ENCODE measurements at regions of chr1 and their contacts with region 1.

Region 1: DNA sequence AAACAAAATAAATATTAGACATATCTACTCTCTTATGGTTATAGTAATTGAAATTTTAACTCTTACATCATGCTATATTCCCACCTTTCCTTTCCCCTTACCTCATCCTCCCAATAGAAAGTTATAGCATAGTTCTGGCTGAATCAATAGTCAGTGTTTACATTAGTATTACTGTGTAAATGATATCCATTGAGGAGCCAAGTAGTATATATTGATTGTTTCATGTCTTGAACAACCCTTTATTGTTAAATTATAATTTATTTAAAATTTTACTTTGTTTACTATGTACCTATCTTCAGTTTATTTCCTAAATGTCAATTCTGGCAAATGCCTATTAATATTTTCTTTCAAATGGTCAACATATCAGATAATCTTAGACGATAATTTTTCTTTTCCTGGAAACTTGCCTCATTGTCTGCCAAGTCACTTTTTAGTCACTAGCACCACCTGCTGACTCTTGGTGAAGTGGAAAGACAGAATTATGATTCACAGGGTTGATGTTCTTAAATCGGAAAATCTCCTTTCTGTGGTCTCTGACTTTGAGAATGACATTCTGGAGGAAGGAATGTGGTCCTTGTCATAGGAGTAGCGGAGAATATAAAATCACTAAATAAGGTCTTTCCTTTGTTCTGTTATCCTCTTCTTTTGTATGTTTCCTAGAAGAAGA is 8.7 kb downstream of the HJV start:
- DNase-seq: no peak
- ATAC-seq: peak; percentile 68
- H3K4me3 ChIP-seq: no peak overlapping the region
- H3K27ac ChIP-seq: no peak overlapping the region
- H3K4me1 ChIP-seq: peaks cover 18% of the 10 kb centered on the region
- H3K27me3 ChIP-seq: no peaks in the 10 kb centered on the region
- CTCF ChIP-seq: peak; percentile 79

Region 2: GRCh38 chr1:145858894-145859490 is 153.9 kb before region 1 on chr1 and contains the start of gene PIAS3:
- intact Hi-C with region 1: loop called (anchors 10 kb)
- DNase-seq: peak; percentile 98
- ATAC-seq: peak; percentile 96
- H3K4me3 ChIP-seq: peak within 1 kb of the TSS; percentile 95
- H3K27ac ChIP-seq: peak within 1 kb of the TSS; percentile 89
- H3K4me1 ChIP-seq: peaks cover 13% of the 10 kb centered on the region
- H3K27me3 ChIP-seq: no peaks in the 10 kb centered on the region
- CTCF ChIP-seq: no peak
- total RNA-seq, gene PIAS3: 29.2 TPM

Region 3: DNA sequence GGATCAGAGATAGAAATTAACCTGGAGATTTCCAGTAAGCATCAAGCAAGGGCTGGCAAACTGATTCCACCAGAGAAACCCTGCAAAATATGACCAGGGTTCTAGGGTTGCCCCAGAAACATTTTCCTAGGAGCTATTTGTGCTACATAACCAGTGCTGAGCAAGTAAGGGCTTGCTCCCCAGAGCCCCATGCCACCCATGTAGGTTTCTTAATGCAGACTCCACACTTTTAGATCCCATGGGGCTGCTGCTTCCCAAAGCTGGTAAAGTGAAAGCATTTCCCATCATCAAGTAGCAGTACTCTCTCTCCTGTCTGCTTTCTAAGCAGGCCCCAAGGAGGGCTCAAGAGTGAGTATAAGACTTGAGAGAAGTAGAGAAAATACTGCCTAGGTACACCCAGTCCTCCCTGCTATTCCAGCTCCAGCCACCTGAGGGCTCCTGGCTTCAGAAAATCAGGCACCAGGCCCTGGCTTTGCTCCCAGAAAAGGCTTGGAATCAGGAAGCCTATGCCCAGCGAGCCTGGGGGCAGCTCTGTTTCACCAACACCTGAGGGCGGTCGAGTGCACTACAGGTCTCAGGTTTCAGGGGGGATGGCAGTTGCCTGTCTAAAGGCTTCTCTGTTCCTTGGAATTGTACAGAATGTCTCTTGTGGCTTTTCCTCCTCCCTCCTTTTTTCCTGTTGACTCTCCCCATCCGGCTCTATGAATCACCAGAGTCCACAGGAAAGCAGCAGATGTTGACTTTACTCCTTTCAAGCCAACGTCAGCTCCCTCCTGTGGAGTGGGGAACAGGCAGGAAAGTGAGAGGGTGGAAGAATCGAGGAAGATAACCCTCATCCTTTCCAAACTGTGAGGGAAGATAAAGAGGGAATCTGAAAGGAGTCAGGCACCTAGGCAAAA is 121.0 kb before region 1 on chr1:
- intact Hi-C with region 1: loop called (anchors 10 kb)
- DNase-seq: peak; percentile 95
- ATAC-seq: peak; percentile 95
- H3K4me3 ChIP-seq: peak overlapping the region; percentile 14
- H3K27ac ChIP-seq: peak overlapping the region; percentile 92
- H3K4me1 ChIP-seq: peaks cover 28% of the 10 kb centered on the region
- H3K27me3 ChIP-seq: no peaks in the 10 kb centered on the region
- CTCF ChIP-seq: peak; percentile 98

Region 4: DNA sequence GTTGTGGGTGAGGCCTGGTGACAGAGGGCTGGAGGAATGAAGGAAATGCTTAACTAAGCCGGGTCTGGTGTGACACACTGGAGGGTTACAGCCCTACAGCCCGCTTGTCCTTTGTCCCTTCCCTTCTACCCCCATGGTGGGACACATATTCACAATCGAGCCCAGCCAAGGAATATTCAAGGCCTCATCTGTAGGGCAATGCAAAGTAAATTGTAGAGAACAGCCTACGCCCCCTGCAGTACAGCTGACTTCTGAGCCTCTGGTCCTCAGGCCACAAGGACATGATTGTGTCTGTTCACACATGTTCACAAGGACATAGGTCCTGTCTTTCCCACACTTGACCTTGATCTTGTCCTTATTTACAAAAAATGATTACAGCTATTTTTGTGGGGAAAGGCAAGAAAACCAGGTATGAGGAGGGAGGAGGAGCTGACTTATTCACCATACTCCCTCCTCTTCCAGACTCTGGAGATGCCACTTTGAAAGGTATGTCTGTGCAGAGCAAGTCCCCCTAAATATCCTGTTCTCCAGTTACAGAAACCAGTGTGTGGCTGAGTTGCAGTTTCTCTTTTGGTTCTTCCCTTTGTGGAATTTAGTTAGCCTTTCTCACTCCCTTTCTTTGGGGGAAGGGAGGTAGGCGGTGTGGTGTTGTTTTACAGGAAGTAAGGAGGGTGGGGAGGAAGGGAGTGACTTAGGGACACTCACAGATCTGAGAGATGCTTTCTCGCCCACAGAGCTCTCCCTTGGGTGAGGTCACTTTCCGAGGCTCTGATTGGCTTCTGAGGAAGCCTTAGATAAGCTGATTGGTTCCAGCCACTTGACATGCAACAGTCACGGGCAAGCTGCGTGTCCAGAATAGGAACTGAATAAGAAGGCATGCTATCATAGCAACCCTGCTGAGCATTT is 33.8 kb before region 1 on chr1:
- intact Hi-C with region 1: loop called (anchors 5 kb)
- DNase-seq: peak; percentile 90
- ATAC-seq: peak; percentile 96
- H3K4me3 ChIP-seq: peak overlapping the region; percentile 35
- H3K27ac ChIP-seq: peak overlapping the region; percentile 98
- H3K4me1 ChIP-seq: peaks cover 69% of the 10 kb centered on the region
- H3K27me3 ChIP-seq: no peaks in the 10 kb centered on the region
- CTCF ChIP-seq: peak; percentile 19